Transverse colon (tissue), 4 donors: ENCODE measurements at regions of chr4 and their contacts with region 1.

Region 1: DNA sequence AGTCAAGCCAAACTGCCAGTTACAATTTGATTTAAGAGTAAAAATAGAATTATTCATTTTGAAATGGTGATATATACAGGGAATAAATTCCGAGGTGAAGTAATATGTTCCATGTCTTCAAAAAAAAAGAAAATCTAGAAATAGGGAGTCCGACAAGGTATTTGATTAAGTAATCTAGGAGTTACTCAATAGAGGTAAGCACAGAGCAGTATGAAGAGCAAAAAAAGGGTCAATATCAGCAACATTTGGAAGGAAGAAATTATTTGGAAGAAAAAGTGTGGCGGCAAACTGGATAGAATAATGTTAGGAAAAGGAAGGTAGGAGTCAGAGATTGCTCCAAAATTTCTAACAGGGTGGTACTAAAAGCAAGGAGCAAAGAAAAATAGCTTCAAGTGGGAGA is 113.7 kb upstream of the BMP3 start:
- DNase-seq: no peak
- H3K4me3 ChIP-seq: no peak overlapping the region
- H3K27ac ChIP-seq: no peak overlapping the region
- H3K4me1 ChIP-seq: no peaks in the 10 kb centered on the region
- H3K27me3 ChIP-seq: no peaks in the 10 kb centered on the region
- CTCF ChIP-seq: no peak
- EP300 ChIP-seq: no peak
- POLR2A ChIP-seq: no peak

Region 2: DNA sequence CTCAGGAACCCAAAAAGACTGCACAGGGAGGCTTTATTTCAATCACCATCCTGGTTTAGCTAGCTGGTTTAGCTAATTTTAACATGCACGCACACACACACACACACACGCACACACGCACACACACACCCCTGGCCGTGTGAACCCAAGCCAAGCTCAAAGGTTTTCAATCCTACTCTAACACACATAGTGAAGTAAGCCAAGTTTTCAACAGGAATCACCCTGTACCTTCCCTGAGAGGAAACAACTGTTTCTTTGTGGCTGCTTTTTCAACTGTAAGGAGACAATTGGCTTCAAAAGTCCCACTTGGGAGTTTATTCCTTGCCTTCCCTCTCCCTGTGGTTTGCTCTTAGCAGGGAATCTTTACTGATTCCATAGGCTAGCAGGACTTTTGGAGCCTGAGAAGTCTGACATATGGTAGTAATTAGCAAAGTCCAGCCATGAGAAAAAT is 14.9 kb after region 1 on chr4:
- in situ Hi-C with region 1: no loop called
- intact Hi-C with region 1: loop called (anchors 1 kb)
- DNase-seq: no peak
- H3K4me3 ChIP-seq: no peak overlapping the region
- H3K27ac ChIP-seq: no peak overlapping the region
- H3K4me1 ChIP-seq: no peaks in the 10 kb centered on the region
- H3K27me3 ChIP-seq: no peaks in the 10 kb centered on the region
- CTCF ChIP-seq: no peak
- EP300 ChIP-seq: no peak
- POLR2A ChIP-seq: no peak